Heart right ventricle (tissue), 16 donors: ENCODE measurements at regions of chr2 and their contacts with region 1.

Region 1: GRCh38 chr2:86747711-86748639 is 27.9 kb downstream of the RMND5A start:
- DNase-seq: peak in 1 of 2 donors; percentile 12
- ATAC-seq: peak in 5 of 8 donors; percentile 71 to 91 (median 77)
- H3K4me3 ChIP-seq: no peak overlapping the region
- H3K27ac ChIP-seq: peak overlapping the region in 5 of 10 donors; percentile 2 to 54 (median 23)
- H3K4me1 ChIP-seq: peaks cover 0 to 62% (median 33%) of the 10 kb centered on the region in 9 donors
- H3K27me3 ChIP-seq: no peaks in the 10 kb centered on the region
- CTCF ChIP-seq: no peak

Region 2: GRCh38 chr2:86686905-86687304 is 61.1 kb before region 1 on chr2:
- intact Hi-C with region 1: loop called in 1 of 10 experiments (anchors 5 kb)
- DNase-seq: no peak
- ATAC-seq: no peak
- H3K4me3 ChIP-seq: no peak overlapping the region
- H3K27ac ChIP-seq: no peak overlapping the region
- H3K4me1 ChIP-seq: no peaks in the 10 kb centered on the region
- H3K27me3 ChIP-seq: no peaks in the 10 kb centered on the region
- CTCF ChIP-seq: no peak

Region 3: DNA sequence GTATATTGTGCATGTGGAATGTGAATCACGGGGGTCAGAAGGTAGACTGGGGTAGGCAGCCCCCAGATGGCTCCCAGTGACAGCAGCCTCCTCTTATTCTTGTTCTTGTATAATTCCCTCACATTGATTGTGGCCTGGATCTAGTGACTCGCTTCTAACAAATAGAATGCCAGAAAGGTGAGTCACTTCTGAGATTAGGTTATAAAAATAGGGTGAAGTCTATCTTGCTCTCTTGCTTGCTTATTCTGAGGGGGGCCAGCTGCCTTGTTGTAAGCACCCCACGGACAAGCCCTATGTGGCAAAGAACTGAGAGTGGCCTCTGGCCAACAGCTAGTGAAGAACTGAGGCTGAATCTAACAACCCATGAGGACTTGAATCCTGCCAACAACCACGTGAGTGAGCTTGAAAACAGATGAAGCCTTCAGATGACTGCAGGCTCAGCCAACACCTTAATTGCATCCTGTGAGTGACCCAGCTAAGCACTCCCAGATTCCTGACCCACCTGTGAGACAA is 43.5 kb before region 1 on chr2:
- intact Hi-C with region 1: loop called in 1 of 10 experiments (anchors 10 kb)
- DNase-seq: peak; percentile 29 to 78
- ATAC-seq: peak; percentile 71 to 93 (median 92)
- H3K4me3 ChIP-seq: peak overlapping the region in 2 of 10 donors; percentile 17 to 23
- H3K27ac ChIP-seq: peak overlapping the region; percentile 66 to 90 (median 84)
- H3K4me1 ChIP-seq: peaks cover 0 to 30% (median 7%) of the 10 kb centered on the region in 9 donors
- H3K27me3 ChIP-seq: no peaks in the 10 kb centered on the region
- CTCF ChIP-seq: no peak